A673 (cell line): ENCODE measurements at regions of chr1 and their contacts with region 1.

Region 1: GRCh38 chr1:85240174-85240601 is 19.3 kb downstream of the C1orf52 start:
- DNase-seq: peak; percentile 84
- H3K4me3 ChIP-seq: no peak overlapping the region
- H3K27ac ChIP-seq: peak overlapping the region; percentile 49
- H3K4me1 ChIP-seq: peaks cover 40% of the 10 kb centered on the region
- H3K27me3 ChIP-seq: no peaks in the 10 kb centered on the region
- CTCF ChIP-seq: peak; percentile 46

Region 2: GRCh38 chr1:85128341-85128740 is 111.8 kb before region 1 on chr1:
- CTCF ChIA-PET with region 1: no interaction called
- POLR2A ChIA-PET with region 1: no interaction called
- intact Hi-C with region 1: no loop called
- DNase-seq: no peak
- H3K4me3 ChIP-seq: no peak overlapping the region
- H3K27ac ChIP-seq: no peak overlapping the region
- H3K4me1 ChIP-seq: no peaks in the 10 kb centered on the region
- H3K27me3 ChIP-seq: no peaks in the 10 kb centered on the region
- CTCF ChIP-seq: no peak

Region 3: DNA sequence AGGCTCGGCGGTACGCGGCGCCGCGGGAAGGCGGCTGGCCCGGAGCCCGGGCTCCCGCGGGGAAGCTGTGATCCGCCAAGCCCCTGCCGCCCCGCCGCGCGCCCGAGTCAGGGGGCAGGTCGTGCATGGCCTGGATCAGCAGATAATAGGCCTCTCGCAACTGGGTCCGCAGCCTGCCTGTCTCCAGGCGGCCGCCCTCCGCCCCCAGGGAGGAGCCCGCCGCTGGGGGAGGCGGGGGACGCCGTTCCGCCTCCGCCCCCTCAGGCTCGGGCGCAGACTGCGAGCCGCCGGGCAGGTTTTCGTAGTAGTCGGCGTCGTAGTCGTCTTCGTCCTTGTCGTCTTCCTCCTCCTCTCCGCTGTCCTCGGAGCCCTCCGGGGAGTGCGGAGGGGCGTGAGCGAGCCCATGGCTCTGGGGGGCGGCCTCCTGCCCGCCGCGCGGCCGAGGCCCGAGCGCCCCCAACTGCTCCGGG is 39.3 kb before region 1 on chr1 and contains the start of gene SYDE2:
- CTCF ChIA-PET with region 1: no interaction called
- POLR2A ChIA-PET with region 1: no interaction called
- intact Hi-C with region 1: loop called (anchors 5 kb)
- DNase-seq: peak; percentile 87
- H3K4me3 ChIP-seq: peak within 1 kb of the TSS; percentile 92
- H3K27ac ChIP-seq: peak within 1 kb of the TSS; percentile 97
- H3K4me1 ChIP-seq: peaks cover 29% of the 10 kb centered on the region
- H3K27me3 ChIP-seq: no peaks in the 10 kb centered on the region
- CTCF ChIP-seq: no peak
- total RNA-seq, gene SYDE2: 10.4 and 10.9 TPM in 2 replicates